BJ (cell line): ENCODE measurements at regions of chr1 and their contacts with region 1.

Region 1: GRCh38 chr1:46036894-46037839 is 95.3 kb downstream of the PIK3R3 start:
- DNase-seq: peak; percentile 18
- H3K4me3 ChIP-seq: no peak overlapping the region
- H3K27me3 ChIP-seq: no peaks in the 10 kb centered on the region
- CTCF ChIP-seq: peak; percentile 97

Region 2: DNA sequence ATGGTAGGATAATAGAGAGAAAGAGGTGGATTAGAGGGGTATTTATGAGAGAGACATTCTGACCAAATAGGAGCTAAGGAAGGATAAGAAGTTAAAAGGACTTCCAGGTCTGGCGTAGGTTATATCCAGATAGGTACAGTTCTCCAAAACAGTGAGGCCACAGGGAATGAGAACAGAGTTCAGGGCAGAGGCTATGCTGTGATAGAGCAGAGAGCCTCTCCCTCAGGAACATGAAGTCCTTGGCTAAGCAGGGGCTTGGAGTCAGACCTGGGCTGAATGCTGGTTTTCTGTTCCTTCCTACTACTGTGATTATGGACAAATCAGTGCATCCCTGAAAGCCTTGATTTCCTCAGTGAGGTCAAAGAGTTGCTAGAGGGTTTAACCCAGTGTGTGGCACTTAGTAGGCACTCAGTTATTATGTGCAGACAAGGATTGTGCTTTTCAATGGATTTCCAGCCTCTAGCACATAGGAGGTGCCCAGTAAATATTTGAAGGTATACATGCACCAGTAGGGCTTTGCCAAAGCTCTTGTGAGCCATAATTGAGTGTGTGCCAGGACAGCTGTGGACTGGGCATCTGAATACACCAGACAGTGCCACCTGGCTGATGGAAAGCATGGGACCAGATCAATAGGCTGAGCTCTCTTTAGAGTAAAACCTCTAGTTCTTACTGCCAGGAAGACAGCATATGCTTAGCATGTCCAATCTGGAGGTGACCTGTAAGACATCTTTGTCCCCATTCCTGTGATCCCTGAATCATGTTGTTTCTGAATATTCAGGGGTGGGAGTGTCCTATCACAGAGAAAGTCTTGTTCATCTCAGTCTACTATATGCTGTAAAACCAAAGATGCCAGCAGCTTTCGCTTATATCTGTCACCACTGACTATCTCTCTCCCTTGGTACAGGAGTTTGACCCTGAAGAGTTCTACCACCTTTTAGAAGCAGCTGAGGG is 15.8 kb before region 1 on chr1:
- CTCF ChIA-PET with region 1: interaction called, 16 read pairs
- POLR2A ChIA-PET with region 1: no interaction called
- DNase-seq: no peak
- H3K4me3 ChIP-seq: no peak overlapping the region
- H3K27me3 ChIP-seq: no peaks in the 10 kb centered on the region
- CTCF ChIP-seq: no peak

Region 3: GRCh38 chr1:46179138-46180081 is 142.2 kb after region 1 on chr1:
- CTCF ChIA-PET with region 1: interaction called, 173 read pairs
- POLR2A ChIA-PET with region 1: no interaction called
- DNase-seq: no peak
- H3K4me3 ChIP-seq: no peak overlapping the region
- H3K27me3 ChIP-seq: no peaks in the 10 kb centered on the region
- CTCF ChIP-seq: peak; percentile 91

Region 4: DNA sequence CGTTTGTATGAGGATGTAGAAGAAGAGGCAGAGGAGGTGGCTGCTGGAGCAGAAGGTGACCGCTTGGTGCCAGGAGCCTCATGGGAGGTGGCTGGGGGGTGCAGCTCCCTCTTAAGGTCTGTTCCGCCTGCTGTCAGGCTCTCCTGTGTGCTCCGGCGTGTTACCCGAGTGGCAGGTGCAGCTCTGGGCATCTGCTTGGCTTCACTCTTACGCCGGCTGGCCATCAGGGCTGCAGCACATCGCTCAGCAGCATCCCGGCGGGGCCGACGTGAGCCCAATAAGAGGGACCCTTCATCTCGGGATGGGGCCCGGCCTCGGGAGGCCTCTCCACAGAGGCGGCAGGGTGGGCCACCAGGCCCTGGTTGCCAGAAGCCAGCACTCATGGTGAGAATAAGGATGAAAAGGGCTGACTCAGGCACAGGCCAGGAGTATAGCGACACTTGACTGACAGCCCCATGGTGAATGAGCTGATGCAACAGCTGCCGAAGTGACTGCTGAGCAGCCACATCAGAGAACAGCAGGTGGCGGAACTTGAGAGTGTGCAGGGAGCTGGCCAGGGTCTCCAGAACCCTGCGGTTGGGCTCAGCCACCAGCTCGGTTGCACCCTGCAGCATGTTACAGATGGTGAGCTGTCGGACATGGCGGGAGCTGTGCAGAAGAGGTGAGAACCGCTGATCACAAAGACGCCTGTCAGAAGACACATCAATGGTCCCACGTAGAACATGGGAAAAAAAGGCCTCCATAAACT is 248.7 kb after region 1 on chr1:
- CTCF ChIA-PET with region 1: no interaction called
- POLR2A ChIA-PET with region 1: no interaction called
- DNase-seq: no peak
- H3K4me3 ChIP-seq: no peak overlapping the region
- H3K27me3 ChIP-seq: no peaks in the 10 kb centered on the region
- CTCF ChIP-seq: no peak